Activated CD4-positive, alpha-beta T cell treated with anti-CD3 and anti-CD28 coated beads, Interleukin-2, amount 10 ng/mL, durations not matched to agents 7 days and 5 days (primary cell): ENCODE measurements at regions of chr7 and their contacts with region 1.

Region 1: DNA sequence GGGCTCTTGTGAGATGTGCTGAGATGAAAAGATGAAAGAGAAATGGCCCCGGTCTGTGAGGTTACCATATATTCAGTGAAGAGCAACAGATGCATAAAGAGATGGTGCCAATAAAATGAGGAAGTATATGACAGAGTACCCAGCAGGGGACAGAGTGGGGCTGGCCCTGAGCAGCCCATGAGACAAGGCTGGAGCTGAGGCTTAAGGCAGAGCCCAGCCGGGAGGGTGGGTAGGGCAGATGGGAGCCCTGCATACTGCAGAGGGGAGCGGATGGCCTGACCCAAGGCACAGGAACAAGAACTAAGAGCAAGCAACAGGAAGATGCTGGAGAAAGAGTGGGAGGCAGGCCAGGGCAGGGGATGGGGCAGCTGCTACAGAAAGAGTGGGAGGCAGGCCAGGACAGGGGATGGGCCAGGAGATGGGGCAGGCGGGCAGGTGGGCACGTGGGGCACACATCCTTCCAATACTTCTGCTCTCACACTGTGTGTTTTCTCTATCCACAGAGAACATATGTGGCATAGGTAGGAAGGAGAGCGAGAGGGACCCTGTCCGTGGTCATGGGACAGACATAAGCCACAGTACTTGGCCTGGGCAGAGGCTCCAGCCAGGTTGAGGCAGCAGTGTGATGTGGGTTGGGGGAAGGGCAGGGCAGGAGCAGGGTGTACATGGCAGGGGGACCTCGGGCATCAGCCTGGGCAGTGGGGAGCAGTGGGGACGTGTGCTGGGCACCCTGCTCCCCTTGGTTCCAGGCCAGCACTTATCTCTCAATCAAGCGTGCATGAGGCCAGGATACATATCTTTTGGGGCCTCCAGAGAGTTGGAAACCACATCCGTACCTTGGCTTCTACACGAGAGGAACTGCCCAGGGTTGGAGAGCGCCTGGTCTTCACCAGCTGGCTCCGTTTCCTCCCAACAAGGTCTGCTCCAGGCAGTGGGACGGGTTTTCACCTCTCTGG is 91.6 kb upstream of the IKZF1 start:
- DNase-seq: peak; percentile 63
- H3K4me3 Mint-ChIP-seq: peak overlapping the region; percentile 49
- H3K27ac Mint-ChIP-seq: peak overlapping the region; percentile 93
- H3K4me1 Mint-ChIP-seq: peaks cover 98% of the 10 kb centered on the region
- H3K27me3 Mint-ChIP-seq: no peaks in the 10 kb centered on the region

Region 2: GRCh38 chr7:49611951-49612350 is 601.0 kb before region 1 on chr7:
- CTCF ChIA-PET with region 1: no interaction called
- POLR2A ChIA-PET with region 1: no interaction called
- DNase-seq: no peak
- H3K4me3 Mint-ChIP-seq: no peak overlapping the region
- H3K27ac Mint-ChIP-seq: no peak overlapping the region
- H3K4me1 Mint-ChIP-seq: no peaks in the 10 kb centered on the region
- H3K27me3 Mint-ChIP-seq: no peaks in the 10 kb centered on the region

Region 3: GRCh38 chr7:50197549-50197948 is 15.4 kb before region 1 on chr7:
- CTCF ChIA-PET with region 1: no interaction called
- POLR2A ChIA-PET with region 1: no interaction called
- DNase-seq: no peak
- H3K4me3 Mint-ChIP-seq: no peak overlapping the region
- H3K27ac Mint-ChIP-seq: no peak overlapping the region
- H3K4me1 Mint-ChIP-seq: peaks cover 22% of the 10 kb centered on the region
- H3K27me3 Mint-ChIP-seq: peaks cover 6% of the 10 kb centered on the region

Region 4: GRCh38 chr7:50227726-50228125 is 14.8 kb after region 1 on chr7:
- CTCF ChIA-PET with region 1: interaction called, 23 read pairs
- POLR2A ChIA-PET with region 1: no interaction called
- DNase-seq: no peak
- H3K4me3 Mint-ChIP-seq: peak overlapping the region; percentile 45
- H3K27ac Mint-ChIP-seq: peak overlapping the region; percentile 92
- H3K4me1 Mint-ChIP-seq: peaks cover 42% of the 10 kb centered on the region
- H3K27me3 Mint-ChIP-seq: no peaks in the 10 kb centered on the region

Region 5: DNA sequence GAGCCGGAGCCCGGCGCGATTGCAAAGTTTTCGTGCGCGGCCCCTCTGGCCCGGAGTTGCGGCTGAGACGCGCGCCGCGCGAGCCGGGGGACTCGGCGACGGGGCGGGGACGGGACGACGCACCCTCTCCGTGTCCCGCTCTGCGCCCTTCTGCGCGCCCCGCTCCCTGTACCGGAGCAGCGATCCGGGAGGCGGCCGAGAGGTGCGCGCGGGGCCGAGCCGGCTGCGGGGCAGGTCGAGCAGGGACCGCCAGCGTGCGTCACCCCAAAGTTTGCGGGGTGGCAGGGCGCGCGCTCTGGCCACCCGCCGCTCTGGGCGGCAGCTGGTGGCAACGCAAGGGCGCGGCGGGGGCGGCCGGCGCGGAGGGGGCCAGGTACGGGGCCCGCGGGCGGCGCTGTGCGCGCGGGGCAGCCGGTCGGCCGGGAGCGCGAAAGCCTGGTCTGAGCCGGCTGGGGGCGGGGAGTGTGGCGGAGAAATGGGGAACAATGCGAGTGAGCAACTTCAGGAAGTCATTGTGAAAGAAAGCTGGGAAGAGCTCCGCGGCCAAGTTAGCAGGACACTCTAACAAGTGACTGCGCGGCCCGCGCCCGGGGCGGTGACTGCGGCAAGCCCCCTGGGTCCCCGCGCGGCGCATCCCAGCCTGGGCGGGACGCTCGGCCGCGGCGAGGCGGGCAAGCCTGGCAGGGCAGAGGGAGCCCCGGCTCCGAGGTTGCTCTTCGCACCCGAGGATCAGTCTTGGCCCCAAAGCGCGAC is 91.4 kb after region 1 on chr7 and contains the start of gene IKZF1:
- CTCF ChIA-PET with region 1: interaction called, 200 read pairs
- POLR2A ChIA-PET with region 1: no interaction called
- DNase-seq: peak; percentile 57
- H3K4me3 Mint-ChIP-seq: peak within 1 kb of the TSS; percentile 97
- H3K27ac Mint-ChIP-seq: peak within 1 kb of the TSS; percentile 100
- H3K4me1 Mint-ChIP-seq: peaks cover 38% of the 10 kb centered on the region
- H3K27me3 Mint-ChIP-seq: no peaks in the 10 kb centered on the region
- total RNA-seq, gene IKZF1: 379 to 406 TPM

Region 6: DNA sequence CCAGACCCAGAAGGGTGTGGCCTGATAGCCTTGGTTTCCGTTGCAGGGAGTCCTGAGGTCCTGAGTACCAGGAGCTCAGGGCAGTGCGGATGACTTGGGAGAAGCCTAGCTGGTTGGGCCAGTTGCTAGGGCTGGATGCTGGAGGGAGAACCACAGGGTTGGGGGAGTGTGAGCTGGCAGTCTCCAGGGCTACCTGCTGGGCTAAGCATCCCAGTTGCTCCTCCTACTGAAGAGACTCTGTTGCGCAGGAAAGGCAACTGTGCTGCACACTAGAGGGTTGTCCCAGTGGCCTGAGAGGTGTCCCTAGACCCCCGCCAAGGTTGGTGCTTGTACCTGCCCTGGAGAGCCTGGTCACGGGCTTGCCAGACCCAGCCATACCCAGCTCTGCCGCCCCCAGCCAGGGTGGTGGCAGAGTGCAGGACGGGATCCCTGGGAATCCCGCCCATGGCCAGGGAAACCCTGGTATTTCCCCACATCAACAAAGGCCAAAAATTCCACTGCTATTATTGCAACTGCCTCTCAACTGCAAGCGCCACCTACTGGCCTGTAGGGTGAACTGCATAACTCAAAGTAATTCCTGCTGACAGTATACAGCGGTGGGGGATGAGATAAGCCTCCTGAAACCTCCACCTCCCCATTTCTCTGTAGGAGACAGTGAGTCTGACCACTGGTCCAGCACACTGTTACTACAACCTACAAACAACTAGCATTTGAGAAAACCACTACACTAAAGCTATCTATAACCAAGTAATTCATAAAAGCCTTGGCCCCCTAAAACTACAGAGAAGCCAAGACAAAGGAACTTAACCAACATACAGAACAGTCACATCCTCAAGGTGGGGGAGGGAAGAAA is 419.8 kb after region 1 on chr7:
- CTCF ChIA-PET with region 1: no interaction called
- POLR2A ChIA-PET with region 1: no interaction called
- DNase-seq: peak; percentile 61
- H3K4me3 Mint-ChIP-seq: no peak overlapping the region
- H3K27ac Mint-ChIP-seq: no peak overlapping the region
- H3K4me1 Mint-ChIP-seq: peaks cover 2% of the 10 kb centered on the region
- H3K27me3 Mint-ChIP-seq: peaks cover 27% of the 10 kb centered on the region